Sigmoid colon (tissue), 7 donors: ENCODE measurements at regions of chr10 and their contacts with region 1.

Region 1: DNA sequence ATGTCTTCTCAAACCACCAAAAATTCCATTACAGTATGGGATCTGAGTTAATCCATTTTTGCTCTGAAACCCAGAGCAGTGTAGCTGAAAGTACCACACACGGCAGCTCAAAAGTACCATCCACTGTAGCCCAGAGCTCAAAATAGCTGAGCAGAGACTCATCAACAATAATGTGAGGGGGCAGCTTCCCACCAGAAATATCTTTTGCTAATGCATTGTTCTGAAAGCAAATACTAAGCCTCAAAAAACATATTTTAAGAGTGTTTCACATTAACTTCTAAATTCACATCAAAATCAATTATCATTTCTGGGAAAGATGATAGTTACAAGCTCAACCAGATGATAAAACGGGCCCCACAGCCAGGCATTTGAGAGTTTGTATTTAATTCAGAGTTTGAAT is 73.7 kb downstream of the ABLIM1 start:
- DNase-seq: no peak
- H3K4me3 ChIP-seq: no peak overlapping the region
- H3K27ac ChIP-seq: no peak overlapping the region
- H3K4me1 ChIP-seq: no peaks in the 10 kb centered on the region
- H3K27me3 ChIP-seq: no peaks in the 10 kb centered on the region
- CTCF ChIP-seq: no peak
- EP300 ChIP-seq: no peak
- POLR2A ChIP-seq: no peak

Region 2: DNA sequence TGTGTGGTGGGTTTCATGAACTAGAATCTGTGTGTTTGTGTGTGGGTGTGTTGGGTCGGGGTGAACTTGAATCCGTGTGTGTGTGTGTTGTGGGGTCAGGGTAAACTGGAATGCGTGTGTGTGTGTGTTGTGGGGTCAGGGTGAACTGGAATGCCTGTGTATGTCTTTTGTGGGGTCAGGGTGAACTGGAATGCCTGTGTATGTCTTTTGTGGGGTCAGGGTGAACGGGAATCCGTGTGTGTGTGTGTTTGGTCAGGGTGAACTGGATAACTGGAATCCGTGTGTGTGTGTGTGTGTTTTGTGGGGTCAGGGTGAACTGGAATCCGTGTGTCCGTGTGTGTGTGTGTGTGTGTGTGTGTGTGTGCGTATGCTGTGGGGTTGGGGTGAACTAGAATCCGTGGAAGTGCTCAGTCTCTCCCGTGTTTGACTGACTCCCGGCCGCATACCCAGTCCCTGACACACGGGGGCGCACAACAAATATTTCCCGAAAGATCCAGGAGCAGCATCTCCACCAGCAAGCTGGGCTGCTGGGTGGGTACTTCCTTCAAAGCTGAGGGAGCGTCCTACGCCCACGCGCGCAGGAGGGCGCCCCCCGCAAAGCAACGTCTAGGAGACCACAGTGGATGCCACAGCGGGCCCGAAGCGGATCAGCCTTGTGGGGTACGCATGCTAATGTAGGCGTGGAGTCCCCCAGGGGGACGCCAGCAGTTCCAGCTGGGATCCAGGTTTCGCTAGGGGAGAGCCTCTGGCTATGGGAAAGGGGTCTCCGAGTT is 905.5 kb before region 1 on chr10:
- intact Hi-C with region 1: no loop called
- DNase-seq: peak; percentile 94
- H3K4me3 ChIP-seq: peak overlapping the region; percentile 83 to 99 (median 94)
- H3K27ac ChIP-seq: peak overlapping the region; percentile 96 to 98 (median 96)
- H3K4me1 ChIP-seq: peaks cover 2 to 22% (median 17%) of the 10 kb centered on the region in 4 donors
- H3K27me3 ChIP-seq: no peaks in the 10 kb centered on the region
- CTCF ChIP-seq: peak; percentile 44 to 82 (median 76)
- EP300 ChIP-seq: no peak
- POLR2A ChIP-seq: no peak

Region 3: DNA sequence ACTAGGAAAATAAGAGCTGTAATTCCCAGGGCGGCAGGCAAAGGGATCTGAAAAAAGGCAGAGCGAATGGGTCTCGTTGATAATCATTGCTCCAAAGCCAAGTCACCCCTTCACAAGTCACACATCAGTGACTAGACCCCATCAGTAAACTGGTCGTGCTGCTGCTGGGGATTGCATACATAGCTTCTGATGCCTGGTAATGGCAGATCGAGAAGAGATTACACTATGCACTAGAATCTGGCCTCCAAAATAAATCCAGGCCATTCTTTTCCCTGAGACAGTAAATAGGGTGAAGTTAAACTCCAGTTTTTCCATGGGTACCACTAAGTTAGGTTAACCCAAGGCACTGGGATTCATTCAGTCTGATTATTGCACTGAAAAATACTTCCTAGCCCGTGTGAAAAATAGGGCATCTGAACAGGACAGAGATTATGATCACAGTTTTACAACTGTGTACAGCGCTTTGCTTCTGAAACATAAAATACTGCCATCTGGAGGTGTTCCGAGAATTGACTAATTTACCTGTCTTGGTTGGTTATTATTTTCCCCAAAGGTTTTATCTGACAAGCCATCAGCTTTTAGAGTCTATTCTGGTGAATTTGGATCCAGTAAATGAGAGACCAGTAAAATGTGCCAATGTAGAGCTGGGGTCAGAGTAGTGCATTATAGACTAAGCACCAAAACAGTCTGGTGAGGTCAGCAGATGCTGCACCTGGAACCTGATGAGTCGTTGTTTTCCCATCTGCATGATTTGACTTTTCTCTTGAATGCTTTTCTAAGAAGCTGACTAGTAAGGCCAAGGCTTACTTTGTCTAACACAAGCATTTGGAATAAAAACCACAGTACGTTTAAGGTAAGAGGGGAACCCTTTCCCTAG is 97.2 kb before region 1 on chr10:
- intact Hi-C with region 1: no loop called
- DNase-seq: no peak
- H3K4me3 ChIP-seq: no peak overlapping the region
- H3K27ac ChIP-seq: peak overlapping the region in 1 of 4 donors; percentile 10
- H3K4me1 ChIP-seq: peaks cover 0 to 8% (median 3%) of the 10 kb centered on the region in 4 donors
- H3K27me3 ChIP-seq: no peaks in the 10 kb centered on the region
- CTCF ChIP-seq: no peak
- EP300 ChIP-seq: no peak
- POLR2A ChIP-seq: no peak

Region 4: GRCh38 chr10:114658175-114658574 is 73.8 kb after region 1 on chr10 and contains the start of gene ABLIM1:
- intact Hi-C with region 1: loop called (anchors 2 kb)
- DNase-seq: no peak
- H3K4me3 ChIP-seq: no peak within 1 kb of the TSS
- H3K27ac ChIP-seq: no peak within 1 kb of the TSS
- H3K4me1 ChIP-seq: no peaks in the 10 kb centered on the region
- H3K27me3 ChIP-seq: no peaks in the 10 kb centered on the region
- CTCF ChIP-seq: no peak
- EP300 ChIP-seq: no peak
- POLR2A ChIP-seq: no peak
- total RNA-seq, gene ABLIM1: 41.9 to 127 (median 73.9) TPM

Region 5: GRCh38 chr10:114703377-114704107 is 119.1 kb after region 1 on chr10:
- intact Hi-C with region 1: no loop called
- DNase-seq: no peak
- H3K4me3 ChIP-seq: no peak overlapping the region
- H3K27ac ChIP-seq: no peak overlapping the region
- H3K4me1 ChIP-seq: no peaks in the 10 kb centered on the region
- H3K27me3 ChIP-seq: no peaks in the 10 kb centered on the region
- CTCF ChIP-seq: peak in 3 of 4 experiments; percentile 23 to 28 (median 26)
- EP300 ChIP-seq: no peak
- POLR2A ChIP-seq: no peak